Activated B cell treated with CpG ODN at 0.5 μM for 24 hours (primary cell): ENCODE measurements at regions of chr7 and their contacts with region 1.

Region 1: DNA sequence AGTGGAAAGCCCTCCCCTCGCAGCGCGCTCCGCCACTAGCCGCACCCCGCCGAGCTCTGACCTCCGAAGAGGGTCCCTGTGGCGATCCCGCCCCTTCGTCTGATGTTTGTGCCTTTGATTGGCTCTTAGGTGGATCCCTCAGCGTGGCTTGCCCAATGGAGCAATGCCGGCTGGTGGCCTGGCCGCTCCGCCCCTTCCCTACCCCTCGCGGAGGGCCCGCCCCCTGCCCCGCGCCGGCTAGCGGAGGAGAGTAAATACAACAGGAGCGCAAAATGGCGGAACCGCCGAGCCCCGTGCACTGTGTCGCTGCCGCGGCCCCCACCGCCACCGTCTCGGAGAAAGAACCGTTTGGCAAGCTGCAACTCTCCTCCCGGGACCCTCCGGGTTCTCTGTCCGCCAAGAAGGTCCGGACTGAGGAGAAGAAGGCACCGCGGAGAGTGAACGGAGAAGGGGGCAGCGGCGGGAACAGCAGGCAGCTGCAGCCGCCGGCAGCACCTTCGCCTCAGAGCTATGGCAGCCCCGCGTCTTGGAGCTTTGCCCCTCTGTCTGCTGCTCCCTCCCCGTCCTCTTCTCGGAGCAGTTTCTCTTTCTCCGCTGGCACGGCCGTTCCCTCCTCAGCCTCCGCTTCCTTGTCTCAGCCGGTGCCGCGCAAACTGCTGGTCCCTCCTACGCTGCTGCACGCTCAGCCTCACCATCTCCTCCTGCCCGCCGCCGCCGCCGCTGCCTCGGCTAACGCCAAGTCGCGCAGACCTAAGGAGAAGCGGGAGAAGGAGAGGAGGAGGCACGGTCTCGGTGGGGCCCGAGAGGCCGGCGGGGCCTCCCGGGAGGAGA is at the start of gene RSBN1L:
- DNase-seq: peak; percentile 96
- ATAC-seq: peak; percentile 94
- H3K4me3 Mint-ChIP-seq: peak within 1 kb of the TSS; percentile 96
- H3K27ac Mint-ChIP-seq: peak within 1 kb of the TSS; percentile 93
- H3K4me1 Mint-ChIP-seq: peaks cover 54% of the 10 kb centered on the region
- H3K27me3 Mint-ChIP-seq: no peaks in the 10 kb centered on the region
- CTCF ChIP-seq: no peak
- total RNA-seq, gene RSBN1L: 24.5 and 25.9 TPM in 2 replicates

Region 2: GRCh38 chr7:77707504-77707992 is 11.1 kb after region 1 on chr7:
- CTCF ChIA-PET with region 1: no interaction called
- POLR2A ChIA-PET with region 1: interaction called, 4 read pairs
- intact Hi-C with region 1: loop called (anchors 1 kb)
- DNase-seq: no peak
- ATAC-seq: no peak
- H3K4me3 Mint-ChIP-seq: no peak overlapping the region
- H3K27ac Mint-ChIP-seq: no peak overlapping the region
- H3K4me1 Mint-ChIP-seq: peaks cover 40% of the 10 kb centered on the region
- H3K27me3 Mint-ChIP-seq: no peaks in the 10 kb centered on the region
- CTCF ChIP-seq: no peak

Region 3: DNA sequence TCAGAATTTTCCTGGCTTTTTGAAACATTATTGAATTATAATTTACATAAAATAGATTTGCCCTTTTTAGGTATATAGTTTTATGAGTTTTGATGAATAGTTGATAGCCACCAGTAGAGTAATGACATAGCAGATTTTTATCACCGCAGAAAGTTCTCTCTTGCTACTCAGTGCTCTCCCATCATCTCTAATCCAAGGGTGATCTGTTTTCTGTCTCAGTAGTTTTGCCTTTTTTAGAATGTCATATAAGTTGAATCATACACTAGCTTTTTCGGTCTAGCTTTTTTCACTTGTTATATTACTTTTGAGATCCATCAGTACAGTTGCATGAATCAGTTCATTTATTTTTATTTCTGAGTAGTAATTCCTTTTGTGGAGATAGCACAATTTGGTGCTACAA is 17.8 kb after region 1 on chr7:
- CTCF ChIA-PET with region 1: no interaction called
- POLR2A ChIA-PET with region 1: interaction called, 4 read pairs
- intact Hi-C with region 1: loop called (anchors 2 kb)
- DNase-seq: no peak
- ATAC-seq: no peak
- H3K4me3 Mint-ChIP-seq: no peak overlapping the region
- H3K27ac Mint-ChIP-seq: no peak overlapping the region
- H3K4me1 Mint-ChIP-seq: peaks cover 48% of the 10 kb centered on the region
- H3K27me3 Mint-ChIP-seq: no peaks in the 10 kb centered on the region
- CTCF ChIP-seq: no peak

Region 4: DNA sequence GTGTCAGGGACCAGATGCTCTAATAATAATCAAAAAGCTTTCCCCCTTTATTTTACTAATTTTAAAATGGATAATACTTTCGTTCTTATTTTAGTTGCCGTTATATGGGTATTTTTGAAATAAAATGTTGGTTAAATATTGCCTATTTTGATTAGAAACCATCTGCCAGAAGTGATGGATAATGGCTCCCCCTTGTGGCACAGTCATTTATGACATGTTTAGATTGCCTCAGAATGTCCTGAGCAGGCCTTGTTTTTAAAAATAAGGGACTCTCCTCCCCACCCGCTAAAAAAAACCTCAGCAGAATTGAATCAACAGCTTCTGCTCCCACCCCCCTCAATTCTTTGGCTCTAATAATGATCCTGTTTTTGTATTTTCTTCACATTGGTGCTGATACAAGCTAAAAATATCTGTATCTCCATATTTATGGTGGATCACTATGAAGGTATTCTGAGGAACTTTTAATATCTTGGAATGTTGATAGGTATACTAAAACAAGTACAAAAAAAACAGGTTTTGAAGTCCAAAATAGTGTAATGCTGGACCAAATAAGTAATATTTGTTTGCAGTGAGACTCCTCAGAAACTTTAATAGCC is 63.0 kb after region 1 on chr7:
- CTCF ChIA-PET with region 1: interaction called, 10 read pairs
- POLR2A ChIA-PET with region 1: interaction called, 14 read pairs
- intact Hi-C with region 1: loop called (anchors 1 kb)
- DNase-seq: no peak
- ATAC-seq: peak; percentile 64
- H3K4me3 Mint-ChIP-seq: no peak overlapping the region
- H3K27ac Mint-ChIP-seq: peak overlapping the region; percentile 50
- H3K4me1 Mint-ChIP-seq: peaks cover 52% of the 10 kb centered on the region
- H3K27me3 Mint-ChIP-seq: no peaks in the 10 kb centered on the region
- CTCF ChIP-seq: peak; percentile 22

Region 5: GRCh38 chr7:78026492-78026891 is 330.1 kb after region 1 on chr7:
- CTCF ChIA-PET with region 1: no interaction called
- POLR2A ChIA-PET with region 1: no interaction called
- intact Hi-C with region 1: no loop called
- DNase-seq: no peak
- ATAC-seq: no peak
- H3K4me3 Mint-ChIP-seq: no peak overlapping the region
- H3K27ac Mint-ChIP-seq: no peak overlapping the region
- H3K4me1 Mint-ChIP-seq: no peaks in the 10 kb centered on the region
- H3K27me3 Mint-ChIP-seq: peaks cover 5% of the 10 kb centered on the region
- CTCF ChIP-seq: no peak